ENCODE measurements at regions of chr2 and their contacts with region 1.

Region 1: DNA sequence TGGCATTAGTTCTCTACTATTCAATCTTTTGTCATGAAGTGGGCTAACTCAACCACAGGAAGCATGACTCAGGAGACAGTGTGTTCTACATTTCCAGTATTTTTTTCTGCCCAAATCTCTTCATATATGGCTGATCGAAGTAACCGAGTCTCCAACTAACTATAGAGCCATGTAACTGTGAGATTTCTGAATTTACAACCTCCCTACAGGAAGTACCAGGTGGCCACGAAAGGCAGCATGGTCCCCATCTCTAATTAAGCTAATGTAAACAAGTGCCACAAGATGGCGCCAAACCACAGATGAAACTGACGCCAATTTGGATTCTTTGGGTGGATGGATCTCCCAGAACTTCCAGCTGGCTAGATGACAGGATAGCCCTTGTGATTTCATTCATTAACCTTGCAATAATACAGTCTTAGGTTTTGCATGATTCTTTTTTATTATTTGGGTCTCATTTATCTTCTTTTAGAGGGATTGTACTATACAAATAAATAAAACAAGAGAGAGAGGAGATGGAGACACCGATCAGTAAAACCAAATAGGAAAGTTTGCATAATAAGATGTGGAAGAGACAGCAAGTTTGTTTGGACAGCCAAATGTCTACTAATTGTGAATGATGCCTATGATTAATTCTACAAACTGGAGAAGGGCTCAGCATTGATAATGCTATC is 18.3 kb upstream of the ARHGAP15 start:
- DNase-seq: peak; percentile 63
- H3K4me3 ChIP-seq: no peak overlapping the region
- H3K27ac ChIP-seq: peak overlapping the region; percentile 41
- H3K4me1 ChIP-seq: peaks cover 3% of the 10 kb centered on the region
- H3K27me3 ChIP-seq: no peaks in the 10 kb centered on the region
- CTCF ChIP-seq: peak; percentile 66 to 70
- POLR2A ChIP-seq: no peak

Region 2: GRCh38 chr2:143083636-143084035 is 27.3 kb before region 1 on chr2:
- CTCF ChIA-PET with region 1: interaction called, 10 read pairs
- POLR2A ChIA-PET with region 1: no interaction called
- dilution Hi-C with region 1: no loop called
- intact Hi-C with region 1: loop called (anchors 2 kb)
- DNase-seq: peak; percentile 75
- H3K4me3 ChIP-seq: peak overlapping the region in 1 of 3 experiments; percentile 28
- H3K27ac ChIP-seq: peak overlapping the region; percentile 77
- H3K4me1 ChIP-seq: peaks cover 9% of the 10 kb centered on the region
- H3K27me3 ChIP-seq: peaks cover 0 to 2% of the 10 kb centered on the region in 2 experiments
- CTCF ChIP-seq: no peak
- POLR2A ChIP-seq: no peak

Region 3: GRCh38 chr2:143217512-143218115 is 106.7 kb after region 1 on chr2:
- CTCF ChIA-PET with region 1: interaction called, 40 read pairs
- POLR2A ChIA-PET with region 1: no interaction called
- dilution Hi-C with region 1: no loop called
- intact Hi-C with region 1: loop called (anchors 1 kb)
- DNase-seq: no peak
- H3K4me3 ChIP-seq: no peak overlapping the region
- H3K27ac ChIP-seq: no peak overlapping the region
- H3K4me1 ChIP-seq: no peaks in the 10 kb centered on the region
- H3K27me3 ChIP-seq: no peaks in the 10 kb centered on the region
- CTCF ChIP-seq: no peak
- POLR2A ChIP-seq: no peak

Region 4: DNA sequence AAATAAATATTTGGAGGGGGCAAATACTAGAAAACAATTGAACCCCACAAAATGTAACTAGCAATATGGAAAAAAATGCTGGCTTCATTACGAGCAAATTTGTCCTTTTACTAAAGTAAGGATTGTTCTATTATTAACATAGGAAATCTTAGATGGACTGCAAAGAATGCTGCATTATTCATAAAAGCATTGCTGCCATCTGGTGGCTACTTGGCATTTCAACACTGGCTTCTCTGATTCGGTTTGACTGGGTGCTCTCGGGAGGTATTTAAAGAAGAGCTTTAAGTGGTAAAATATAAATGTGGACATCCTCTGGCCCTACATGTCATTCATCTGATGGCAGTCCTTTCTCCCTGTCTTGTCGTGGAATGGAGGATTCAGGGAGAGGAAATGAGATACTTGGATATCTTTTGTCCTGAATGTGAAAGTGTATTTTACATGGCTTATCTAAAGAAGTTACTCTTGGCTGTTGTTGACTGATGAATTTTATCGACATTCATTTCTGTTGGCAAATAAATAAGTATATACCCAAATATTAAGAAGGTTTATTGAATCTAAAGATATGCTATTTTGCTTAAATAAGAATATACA is 148.6 kb after region 1 on chr2:
- CTCF ChIA-PET with region 1: interaction called, 57 read pairs
- POLR2A ChIA-PET with region 1: no interaction called
- dilution Hi-C with region 1: no loop called
- intact Hi-C with region 1: loop called (anchors 1 kb)
- DNase-seq: peak; percentile 73
- H3K4me3 ChIP-seq: no peak overlapping the region
- H3K27ac ChIP-seq: no peak overlapping the region
- H3K4me1 ChIP-seq: peaks cover 12% of the 10 kb centered on the region
- H3K27me3 ChIP-seq: no peaks in the 10 kb centered on the region
- CTCF ChIP-seq: peak; percentile 63 to 68
- POLR2A ChIP-seq: no peak